HepG2 (cell line): ENCODE measurements at regions of chr6 and their contacts with region 1.

Region 1: GRCh38 chr6:32397252-32397920 is 9.6 kb downstream of the BTNL2 start:
- DNase-seq: no peak
- ATAC-seq: no peak
- H3K4me3 ChIP-seq: no peak overlapping the region
- H3K27ac ChIP-seq: no peak overlapping the region
- H3K4me1 ChIP-seq: no peaks in the 10 kb centered on the region
- H3K27me3 ChIP-seq: peaks cover 0 to 40% of the 10 kb centered on the region in 2 experiments; a peak in 2 of 5 replicates
- CTCF ChIP-seq: no peak
- EP300 ChIP-seq: no peak
- POLR2A ChIP-seq: no peak
- RAD21 ChIP-seq: no peak

Region 2: DNA sequence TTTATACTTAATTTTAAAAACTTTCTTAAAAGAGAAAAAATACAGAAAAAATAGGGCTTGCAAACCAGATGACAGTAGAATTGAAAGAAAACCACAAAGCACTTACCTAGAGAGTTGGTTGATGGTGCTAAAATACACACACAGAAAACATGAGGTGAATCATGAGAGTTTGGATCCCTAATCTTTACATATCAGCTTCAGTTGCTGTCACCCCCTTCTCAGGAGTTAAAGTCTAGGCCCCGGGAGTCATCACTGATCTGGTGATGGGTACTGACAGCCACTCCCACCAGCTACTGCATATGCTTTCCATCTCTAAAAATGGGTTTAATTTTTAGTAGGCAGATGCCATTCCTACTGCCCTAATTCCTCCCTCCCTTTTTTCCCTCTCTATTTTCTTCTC is 42.4 kb before region 1 on chr6:
- CTCF ChIA-PET with region 1: no interaction called
- POLR2A ChIA-PET with region 1: no interaction called
- in situ Hi-C with region 1: no loop called
- intact Hi-C with region 1: no loop called
- DNase-seq: no peak
- ATAC-seq: no peak
- H3K4me3 ChIP-seq: no peak overlapping the region
- H3K27ac ChIP-seq: no peak overlapping the region
- H3K4me1 ChIP-seq: no peaks in the 10 kb centered on the region
- H3K27me3 ChIP-seq: no peaks in the 10 kb centered on the region
- CTCF ChIP-seq: no peak
- EP300 ChIP-seq: no peak
- POLR2A ChIP-seq: no peak
- RAD21 ChIP-seq: no peak

Region 3: GRCh38 chr6:32424589-32425300 is 27.4 kb after region 1 on chr6:
- CTCF ChIA-PET with region 1: no interaction called
- POLR2A ChIA-PET with region 1: no interaction called
- in situ Hi-C with region 1: no loop called
- intact Hi-C with region 1: loop called (anchors 2 kb)
- DNase-seq: no peak
- ATAC-seq: no peak
- H3K4me3 ChIP-seq: no peak overlapping the region
- H3K27ac ChIP-seq: no peak overlapping the region
- H3K4me1 ChIP-seq: peaks cover 8% of the 10 kb centered on the region
- H3K27me3 ChIP-seq: peaks cover 0 to 13% of the 10 kb centered on the region in 2 experiments; a peak in 1 of 5 replicates
- CTCF ChIP-seq: no peak
- EP300 ChIP-seq: no peak
- POLR2A ChIP-seq: no peak
- RAD21 ChIP-seq: no peak

Region 4: DNA sequence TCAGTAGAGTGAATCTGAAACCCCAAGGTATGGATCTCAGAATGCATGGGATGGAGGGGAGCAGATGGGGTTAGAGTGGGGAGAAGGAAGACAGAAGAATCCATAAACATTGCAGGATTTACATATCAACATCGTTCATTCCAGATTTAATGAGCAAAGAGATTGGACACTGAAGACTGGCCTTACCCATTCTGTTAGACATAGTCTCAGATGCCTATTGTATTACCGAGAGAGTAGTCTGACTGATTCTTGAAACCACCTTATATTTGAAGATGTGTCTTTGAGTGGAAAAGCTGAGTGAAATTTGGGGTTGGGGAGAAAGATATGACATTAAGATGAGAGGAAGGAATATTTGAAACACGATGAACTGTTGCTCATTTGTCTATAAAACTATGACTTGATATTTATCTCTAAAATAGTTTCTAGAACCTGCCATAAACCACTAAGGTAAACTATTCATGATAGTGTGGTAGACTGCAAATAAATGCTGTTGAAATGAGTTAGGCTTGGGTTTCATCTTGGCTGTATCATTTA is 48.0 kb after region 1 on chr6:
- CTCF ChIA-PET with region 1: no interaction called
- POLR2A ChIA-PET with region 1: no interaction called
- in situ Hi-C with region 1: no loop called
- intact Hi-C with region 1: no loop called
- DNase-seq: no peak
- ATAC-seq: no peak
- H3K4me3 ChIP-seq: no peak overlapping the region
- H3K27ac ChIP-seq: no peak overlapping the region
- H3K4me1 ChIP-seq: no peaks in the 10 kb centered on the region
- H3K27me3 ChIP-seq: peaks cover 0 to 3% of the 10 kb centered on the region in 2 experiments; a peak in 2 of 5 replicates
- CTCF ChIP-seq: no peak
- EP300 ChIP-seq: no peak
- POLR2A ChIP-seq: no peak
- RAD21 ChIP-seq: no peak

Region 5: GRCh38 chr6:32558426-32559057 is 161.2 kb after region 1 on chr6:
- CTCF ChIA-PET with region 1: no interaction called
- POLR2A ChIA-PET with region 1: no interaction called
- in situ Hi-C with region 1: no loop called
- intact Hi-C with region 1: no loop called
- DNase-seq: no peak
- ATAC-seq: no peak
- H3K4me3 ChIP-seq: no peak overlapping the region
- H3K27ac ChIP-seq: no peak overlapping the region
- H3K4me1 ChIP-seq: 0 out of 2 replicates have a peak, but pooled peaks cover 6% of the 10 kb centered on the region
- H3K27me3 ChIP-seq: peaks cover 0 to 6% of the 10 kb centered on the region in 2 experiments; a peak in 1 of 5 replicates
- CTCF ChIP-seq: no peak
- EP300 ChIP-seq: no peak
- POLR2A ChIP-seq: no peak
- RAD21 ChIP-seq: no peak

Region 6: GRCh38 chr6:32622545-32623401 is 225.4 kb after region 1 on chr6:
- CTCF ChIA-PET with region 1: no interaction called
- POLR2A ChIA-PET with region 1: no interaction called
- in situ Hi-C with region 1: no loop called
- intact Hi-C with region 1: no loop called
- DNase-seq: peak; percentile 28
- ATAC-seq: peak; percentile 81
- H3K4me3 ChIP-seq: no peak overlapping the region
- H3K27ac ChIP-seq: no peak overlapping the region
- H3K4me1 ChIP-seq: no peaks in the 10 kb centered on the region
- H3K27me3 ChIP-seq: peaks cover 0 to 3% of the 10 kb centered on the region in 2 experiments; a peak in 2 of 5 replicates
- CTCF ChIP-seq: peak; percentile 58
- EP300 ChIP-seq: no peak
- POLR2A ChIP-seq: no peak
- RAD21 ChIP-seq: no peak